Mammary epithelial cell (primary cell): ENCODE measurements at regions of chr22 and their contacts with region 1.

Region 1: DNA sequence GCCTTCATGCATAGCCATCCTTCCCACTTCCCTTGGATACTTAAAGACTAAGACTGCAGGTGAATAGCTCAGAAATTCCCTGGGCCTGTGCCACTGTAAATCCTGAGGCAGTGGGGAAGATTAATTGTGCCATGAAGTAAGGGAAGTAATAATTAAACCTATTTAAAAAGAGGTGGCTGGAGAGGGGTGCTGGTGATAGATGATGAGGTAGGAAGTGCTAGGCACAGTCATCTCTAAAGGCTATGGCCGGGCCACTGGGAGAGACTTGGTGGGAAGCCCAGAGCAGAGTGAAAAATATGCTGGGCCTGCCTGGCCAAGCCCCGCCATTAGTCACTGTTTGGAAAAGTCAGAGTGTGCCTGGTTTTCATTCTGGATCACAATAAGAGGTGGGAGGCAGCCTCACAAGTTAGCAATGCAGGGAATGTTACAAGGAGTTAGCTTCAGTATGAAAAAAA is 197.2 kb upstream of the PITPNB start:
- DNase-seq: peak; percentile 92
- H3K4me3 ChIP-seq: no peak overlapping the region
- H3K27ac ChIP-seq: peak overlapping the region; percentile 87
- H3K4me1 ChIP-seq: peaks cover 28% of the 10 kb centered on the region
- H3K27me3 ChIP-seq: no peaks in the 10 kb centered on the region
- CTCF ChIP-seq: no peak

Region 2: GRCh38 chr22:28019881-28020871 is 96.1 kb before region 1 on chr22:
- CTCF ChIA-PET with region 1: no interaction called
- dilution Hi-C with region 1: no loop called
- in situ Hi-C with region 1: no loop called
- intact Hi-C with region 1: no loop called
- DNase-seq: peak; percentile 23
- H3K4me3 ChIP-seq: no peak overlapping the region
- H3K27ac ChIP-seq: no peak overlapping the region
- H3K4me1 ChIP-seq: peaks cover 4% of the 10 kb centered on the region
- H3K27me3 ChIP-seq: no peaks in the 10 kb centered on the region
- CTCF ChIP-seq: peak; percentile 85 to 95

Region 3: GRCh38 chr22:28139961-28140360 is 23.7 kb after region 1 on chr22:
- CTCF ChIA-PET with region 1: no interaction called
- dilution Hi-C with region 1: no loop called
- in situ Hi-C with region 1: no loop called
- intact Hi-C with region 1: loop called (anchors 1 kb)
- DNase-seq: peak; percentile 77
- H3K4me3 ChIP-seq: no peak overlapping the region
- H3K27ac ChIP-seq: no peak overlapping the region
- H3K4me1 ChIP-seq: peaks cover 38% of the 10 kb centered on the region
- H3K27me3 ChIP-seq: no peaks in the 10 kb centered on the region
- CTCF ChIP-seq: no peak

Region 4: GRCh38 chr22:28172892-28173670 is 56.8 kb after region 1 on chr22:
- CTCF ChIA-PET with region 1: no interaction called
- dilution Hi-C with region 1: no loop called
- in situ Hi-C with region 1: no loop called
- intact Hi-C with region 1: loop called (anchors 2 kb)
- DNase-seq: peak; percentile 80
- H3K4me3 ChIP-seq: no peak overlapping the region
- H3K27ac ChIP-seq: peak overlapping the region; percentile 52
- H3K4me1 ChIP-seq: peaks cover 14% of the 10 kb centered on the region
- H3K27me3 ChIP-seq: no peaks in the 10 kb centered on the region
- CTCF ChIP-seq: no peak

Region 5: DNA sequence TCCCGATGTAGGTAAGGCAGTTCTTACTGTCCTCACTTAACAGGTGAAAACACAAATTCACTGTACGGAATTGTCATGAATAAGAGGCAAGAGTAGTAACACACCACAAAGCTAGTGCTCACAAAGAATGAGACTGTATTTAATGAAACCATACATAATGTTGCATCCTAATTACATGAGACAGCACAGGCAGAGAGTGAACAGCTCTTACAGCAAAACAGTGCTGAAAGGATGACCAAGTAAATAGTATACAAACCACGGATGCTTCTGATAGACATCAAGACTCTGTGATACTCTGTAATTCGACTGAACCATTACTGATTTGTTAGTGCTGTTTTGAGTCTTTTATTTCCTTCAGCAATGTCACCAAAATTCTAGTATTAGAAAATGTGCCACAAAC is 281.1 kb after region 1 on chr22:
- CTCF ChIA-PET with region 1: interaction called, 10 read pairs
- dilution Hi-C with region 1: no loop called
- in situ Hi-C with region 1: no loop called
- intact Hi-C with region 1: no loop called
- DNase-seq: no peak
- H3K4me3 ChIP-seq: no peak overlapping the region
- H3K27ac ChIP-seq: no peak overlapping the region
- H3K4me1 ChIP-seq: no peaks in the 10 kb centered on the region
- H3K27me3 ChIP-seq: no peaks in the 10 kb centered on the region
- CTCF ChIP-seq: no peak